ENCODE measurements at regions of chr13 and their contacts with region 1.

Region 1: GRCh38 chr13:23018143-23018542 is 162.6 kb upstream of the SGCG start:
- DNase-seq: no peak
- H3K4me3 ChIP-seq: no peak overlapping the region
- H3K27ac ChIP-seq: no peak overlapping the region
- H3K4me1 ChIP-seq: no peaks in the 10 kb centered on the region
- H3K27me3 ChIP-seq: no peaks in the 10 kb centered on the region
- CTCF ChIP-seq: no peak
- POLR2A ChIP-seq: no peak

Region 2: GRCh38 chr13:22801402-22802003 is 216.6 kb before region 1 on chr13:
- intact Hi-C with region 1: loop called in 1 of 2 experiments (anchors 5 kb)
- DNase-seq: peak in 1 of 7 donors; percentile 13
- H3K4me3 ChIP-seq: no peak overlapping the region
- H3K27ac ChIP-seq: no peak overlapping the region
- H3K4me1 ChIP-seq: no peaks in the 10 kb centered on the region
- H3K27me3 ChIP-seq: no peaks in the 10 kb centered on the region
- CTCF ChIP-seq: peak; percentile 9 to 69 (median 50)
- POLR2A ChIP-seq: no peak

Measured in adrenal gland (tissue), 19 donors.